ENCODE measurements at regions of chr2 and their contacts with region 1.

Region 1: GRCh38 chr2:160269803-160270570 is 69.9 kb upstream of the ITGB6 start:
- DNase-seq: peak; percentile 96
- H3K4me3 ChIP-seq: peak overlapping the region; percentile 37 to 55 (median 53)
- H3K27ac ChIP-seq: peak overlapping the region; percentile 90 to 97 (median 92)
- H3K4me1 ChIP-seq: peaks cover 0 to 38% (median 27%) of the 10 kb centered on the region in 4 donors
- H3K27me3 ChIP-seq: no peaks in the 10 kb centered on the region
- CTCF ChIP-seq: peak; percentile 61 to 75 (median 72)
- EP300 ChIP-seq: peak in 2 of 4 donors; percentile 13 to 63
- POLR2A ChIP-seq: peak in 1 of 2 donors; percentile 39

Region 2: GRCh38 chr2:160406591-160407392 is 136.8 kb after region 1 on chr2:
- intact Hi-C with region 1: loop called (anchors 1 kb)
- DNase-seq: peak; percentile 80
- H3K4me3 ChIP-seq: peak overlapping the region; percentile 76 to 100 (median 96)
- H3K27ac ChIP-seq: peak overlapping the region; percentile 95 to 99 (median 98)
- H3K4me1 ChIP-seq: peaks cover 0 to 74% (median 63%) of the 10 kb centered on the region in 4 donors
- H3K27me3 ChIP-seq: no peaks in the 10 kb centered on the region
- CTCF ChIP-seq: no peak
- EP300 ChIP-seq: no peak
- POLR2A ChIP-seq: peak; percentile 26 to 46

Region 3: GRCh38 chr2:160419776-160420505 is 150.0 kb after region 1 on chr2:
- intact Hi-C with region 1: loop called (anchors 5 kb)
- DNase-seq: no peak
- H3K4me3 ChIP-seq: no peak overlapping the region
- H3K27ac ChIP-seq: peak overlapping the region in 3 of 4 donors; percentile 36 to 54 (median 43)
- H3K4me1 ChIP-seq: peaks cover 0 to 43% (median 19%) of the 10 kb centered on the region in 4 donors
- H3K27me3 ChIP-seq: no peaks in the 10 kb centered on the region
- CTCF ChIP-seq: no peak
- EP300 ChIP-seq: no peak
- POLR2A ChIP-seq: no peak

Region 4: DNA sequence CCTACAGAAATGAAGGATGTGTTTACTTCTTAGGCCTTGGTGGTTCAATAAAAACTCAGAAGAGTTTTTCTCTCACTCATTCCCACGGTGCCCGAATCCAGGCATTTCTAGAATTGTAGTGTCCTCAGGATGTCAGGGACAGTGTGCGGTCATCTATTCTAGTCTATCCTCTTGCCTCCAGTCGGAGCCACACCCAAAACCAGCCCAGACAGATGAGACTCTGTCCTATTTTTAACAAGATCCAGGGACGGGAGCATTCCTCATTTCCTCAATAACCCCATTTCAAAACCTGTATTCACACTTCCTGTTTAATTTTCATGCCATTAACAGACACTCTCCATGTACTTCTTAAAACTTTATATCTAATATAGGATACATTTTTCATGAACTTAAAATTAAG is 235.3 kb after region 1 on chr2:
- intact Hi-C with region 1: no loop called
- DNase-seq: no peak
- H3K4me3 ChIP-seq: no peak overlapping the region
- H3K27ac ChIP-seq: no peak overlapping the region
- H3K4me1 ChIP-seq: peaks cover 0 to 10% (median 0%) of the 10 kb centered on the region in 4 donors
- H3K27me3 ChIP-seq: no peaks in the 10 kb centered on the region
- CTCF ChIP-seq: no peak
- EP300 ChIP-seq: no peak
- POLR2A ChIP-seq: no peak

Region 5: DNA sequence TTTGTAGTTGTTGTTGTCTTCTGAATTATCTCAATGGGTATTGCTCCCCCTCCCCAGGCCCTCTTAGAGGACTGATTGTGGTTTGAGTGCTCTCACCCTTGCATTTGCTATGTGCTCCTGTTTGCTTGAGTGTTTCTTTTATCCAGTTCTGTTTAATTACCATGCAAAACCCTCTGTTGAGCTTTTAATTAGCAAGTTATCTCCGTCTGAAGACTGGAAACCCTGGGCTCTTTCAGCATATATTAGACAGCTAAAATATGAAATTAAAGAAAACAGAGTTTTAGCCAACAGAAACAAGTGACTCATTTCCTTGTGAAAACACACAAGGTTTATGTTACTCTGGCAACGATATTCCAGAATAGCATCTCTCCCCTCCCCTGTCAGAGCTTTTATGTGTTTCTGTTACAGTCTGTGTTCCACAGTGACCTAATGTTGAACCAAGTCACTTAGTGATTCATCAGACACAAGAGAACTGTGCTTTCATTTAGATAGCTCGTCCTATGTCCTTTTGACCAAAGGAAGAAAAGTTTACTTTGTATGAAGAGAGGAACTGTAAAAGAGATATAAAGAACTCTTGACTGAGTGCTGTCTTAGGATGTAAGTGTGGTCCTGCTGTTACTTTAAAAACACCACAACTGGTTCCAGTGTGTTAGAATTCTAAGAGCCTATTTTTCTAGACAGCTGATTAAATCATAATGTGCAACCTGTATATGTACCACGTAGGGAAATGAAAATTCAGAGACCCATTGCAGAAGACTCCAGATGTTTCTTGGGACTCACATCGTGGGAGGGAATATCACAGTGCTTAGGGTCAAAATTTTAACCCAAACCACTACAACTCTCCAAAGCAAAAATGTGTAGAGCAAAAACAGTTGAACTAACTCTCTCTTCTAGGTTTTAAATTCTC is 396.4 kb after region 1 on chr2:
- intact Hi-C with region 1: loop called (anchors 5 kb)
- DNase-seq: no peak
- H3K4me3 ChIP-seq: peak overlapping the region in 3 of 4 donors; percentile 8 to 22 (median 19)
- H3K27ac ChIP-seq: peak overlapping the region; percentile 72 to 88 (median 82)
- H3K4me1 ChIP-seq: peaks cover 0 to 23% (median 19%) of the 10 kb centered on the region in 4 donors
- H3K27me3 ChIP-seq: no peaks in the 10 kb centered on the region
- CTCF ChIP-seq: no peak
- EP300 ChIP-seq: peak; percentile 9 to 93 (median 76)
- POLR2A ChIP-seq: no peak

Region 6: GRCh38 chr2:160816916-160817499 is 547.0 kb after region 1 on chr2:
- intact Hi-C with region 1: loop called (anchors 10 kb)
- DNase-seq: no peak
- H3K4me3 ChIP-seq: no peak overlapping the region
- H3K27ac ChIP-seq: no peak overlapping the region
- H3K4me1 ChIP-seq: peaks cover 0 to 6% (median 0%) of the 10 kb centered on the region in 4 donors
- H3K27me3 ChIP-seq: no peaks in the 10 kb centered on the region
- CTCF ChIP-seq: no peak
- EP300 ChIP-seq: no peak
- POLR2A ChIP-seq: no peak

Region 7: DNA sequence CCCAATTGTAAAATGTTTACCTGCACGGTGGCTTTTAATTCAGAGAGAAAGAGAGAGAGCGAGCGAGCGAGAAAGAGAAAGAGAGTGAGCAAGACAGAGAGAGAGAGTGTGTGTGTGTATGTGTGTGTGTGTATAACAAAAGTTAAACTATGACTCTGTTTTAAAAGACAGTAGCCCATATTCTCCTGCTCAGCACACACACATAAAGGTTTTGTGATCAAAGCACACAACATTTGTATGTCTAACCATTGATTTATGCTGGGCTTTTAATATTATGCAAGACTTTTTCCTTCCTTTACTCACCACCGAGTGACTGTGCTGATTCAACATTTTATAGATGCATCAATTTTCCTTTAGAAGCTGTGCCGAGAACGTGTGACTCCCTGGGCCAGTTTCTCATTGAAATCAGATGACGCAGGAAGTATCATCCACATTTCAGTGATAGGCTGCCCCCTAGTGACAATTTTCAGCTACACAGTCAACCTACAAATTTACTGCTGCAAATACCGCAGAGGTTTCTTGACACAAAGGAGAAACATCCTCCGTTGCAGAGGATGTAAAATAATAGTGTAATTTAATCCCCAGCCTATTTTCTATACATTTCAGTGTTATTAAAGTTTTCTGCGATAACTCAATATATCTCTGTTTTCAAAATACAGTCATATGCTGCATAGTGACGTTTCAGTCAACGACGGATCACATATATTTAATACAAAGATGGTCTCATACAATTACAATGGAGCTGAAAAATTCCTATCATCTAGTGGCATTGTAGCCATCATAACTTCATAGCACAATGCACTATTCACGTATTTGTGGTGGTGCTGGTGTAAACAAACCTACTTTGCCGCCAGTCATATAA is 724.4 kb after region 1 on chr2:
- intact Hi-C with region 1: loop called (anchors 5 kb)
- DNase-seq: peak; percentile 93
- H3K4me3 ChIP-seq: peak overlapping the region in 3 of 4 donors; percentile 16 to 34 (median 23)
- H3K27ac ChIP-seq: peak overlapping the region in 3 of 4 donors; percentile 63 to 78 (median 69)
- H3K4me1 ChIP-seq: peaks cover 0 to 32% (median 8%) of the 10 kb centered on the region in 4 donors
- H3K27me3 ChIP-seq: no peaks in the 10 kb centered on the region
- CTCF ChIP-seq: peak; percentile 57 to 92 (median 81)
- EP300 ChIP-seq: peak in 3 of 4 donors; percentile 64 to 72 (median 68)
- POLR2A ChIP-seq: no peak